ENCODE measurements at regions of chr6 and their contacts with region 1.

Region 1: GRCh38 chr6:30672445-30673253 is at the start of gene DHX16:
- DNase-seq: peak; percentile 96 to 97 (median 97)
- H3K4me3 ChIP-seq: peak within 1 kb of the TSS; percentile 76 to 99 (median 94)
- H3K27ac ChIP-seq: peak within 1 kb of the TSS; percentile 61 to 83
- H3K4me1 ChIP-seq: peaks cover 3 to 20% (median 17%) of the 10 kb centered on the region in 4 experiments
- H3K27me3 ChIP-seq: no peaks in the 10 kb centered on the region

Region 2: GRCh38 chr6:30411515-30412207 is 261.0 kb before region 1 on chr6:
- CTCF ChIA-PET with region 1: no interaction called
- POLR2A ChIA-PET with region 1: no interaction called
- DNase-seq: peak; percentile 39 to 67 (median 62)
- H3K4me3 ChIP-seq: no peak overlapping the region
- H3K27ac ChIP-seq: no peak overlapping the region
- H3K4me1 ChIP-seq: no peaks in the 10 kb centered on the region
- H3K27me3 ChIP-seq: peaks cover 14 to 90% (median 28%) of the 10 kb centered on the region in 5 experiments

Region 3: GRCh38 chr6:30578051-30578450 is 94.6 kb before region 1 on chr6:
- CTCF ChIA-PET with region 1: no interaction called
- POLR2A ChIA-PET with region 1: interaction called, 10 read pairs
- DNase-seq: no peak
- H3K4me3 ChIP-seq: no peak overlapping the region
- H3K27ac ChIP-seq: no peak overlapping the region
- H3K4me1 ChIP-seq: peaks cover 0 to 11% (median 2%) of the 10 kb centered on the region in 4 experiments
- H3K27me3 ChIP-seq: no peaks in the 10 kb centered on the region

Region 4: DNA sequence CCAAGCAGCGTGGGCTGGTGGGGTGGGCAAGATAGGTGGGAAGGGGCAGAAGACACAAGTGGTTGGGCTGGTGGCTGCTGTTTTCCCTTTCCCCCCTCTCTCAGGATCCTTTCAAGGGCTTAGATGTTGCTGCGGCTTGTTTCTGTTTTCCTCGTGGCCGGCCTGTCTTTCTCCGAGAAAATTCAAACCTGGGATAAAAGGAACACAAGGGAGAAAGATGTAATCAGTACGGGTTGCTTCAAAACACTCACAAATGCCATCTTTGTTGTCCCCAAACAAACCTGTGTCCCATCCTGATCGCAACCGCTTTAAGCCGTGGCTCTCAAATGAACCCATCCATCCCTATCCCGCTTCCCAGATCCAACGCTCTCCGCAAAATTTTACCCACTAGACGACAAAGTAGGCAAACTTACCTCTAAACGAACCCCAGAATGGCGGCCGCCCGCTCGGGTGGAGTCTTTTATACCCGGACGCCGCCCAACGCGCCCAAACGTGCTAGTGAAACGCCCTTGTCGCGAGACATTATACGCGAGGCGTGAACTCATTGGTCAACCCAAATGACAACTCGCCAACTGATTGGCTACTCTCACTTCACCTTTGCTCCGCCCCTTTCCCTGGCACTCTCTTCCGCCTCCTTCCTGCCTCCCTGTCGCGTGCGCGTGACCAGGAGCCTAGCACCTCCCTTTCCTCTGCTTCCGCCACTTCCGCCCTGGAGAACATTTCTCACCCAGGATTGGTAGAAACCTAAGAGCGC is 55.7 kb before region 1 on chr6 and contains the start of gene PPP1R10:
- CTCF ChIA-PET with region 1: interaction called, 11 read pairs
- POLR2A ChIA-PET with region 1: no interaction called
- DNase-seq: peak; percentile 100
- H3K4me3 ChIP-seq: peak within 1 kb of the TSS; percentile 74 to 100 (median 100)
- H3K27ac ChIP-seq: peak within 1 kb of the TSS; percentile 100
- H3K4me1 ChIP-seq: peaks cover 18 to 42% (median 29%) of the 10 kb centered on the region in 4 experiments
- H3K27me3 ChIP-seq: no peaks in the 10 kb centered on the region

Region 5: DNA sequence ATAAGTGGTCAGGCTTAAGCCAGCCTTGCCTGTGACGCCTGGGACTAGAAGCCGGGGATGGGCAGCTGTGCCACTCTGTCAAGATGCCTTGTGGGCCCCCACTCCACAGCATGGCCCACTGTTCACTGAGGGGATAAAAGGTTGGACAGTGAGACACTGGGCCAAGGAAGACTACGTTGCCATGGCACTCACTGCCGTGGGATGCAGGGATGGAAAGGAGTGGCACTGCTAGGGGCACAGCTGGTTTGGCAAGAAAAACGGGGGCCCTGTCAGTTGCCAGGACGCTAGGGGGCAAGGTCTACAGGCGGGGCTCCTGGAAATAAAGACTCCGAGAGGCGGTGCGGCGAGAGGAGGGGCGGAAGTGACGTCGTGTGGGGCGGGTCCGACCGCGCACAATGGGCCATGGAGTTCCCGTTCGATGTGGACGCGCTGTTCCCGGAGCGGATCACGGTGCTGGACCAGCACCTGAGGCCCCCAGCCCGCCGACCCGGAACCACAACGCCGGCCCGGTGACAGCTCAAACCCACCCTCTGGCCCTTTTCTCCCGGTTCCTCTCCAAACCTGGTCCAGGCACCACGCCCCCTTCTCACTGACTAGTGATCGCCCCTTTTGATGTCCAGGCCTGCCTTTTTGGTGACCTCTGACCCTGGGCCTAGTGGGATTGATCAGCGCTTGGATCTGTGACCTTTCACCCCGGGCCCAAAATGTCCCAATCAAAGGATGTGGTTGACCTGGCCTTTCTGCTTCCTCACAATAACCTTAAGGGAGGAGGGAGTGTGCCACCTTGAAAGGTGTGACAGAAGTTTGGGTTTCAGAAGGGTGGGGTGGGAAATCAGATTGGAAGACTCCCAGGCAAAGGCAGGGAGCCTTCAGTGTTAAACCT is 45.9 kb before region 1 on chr6 and contains the start of gene ATAT1:
- CTCF ChIA-PET with region 1: interaction called, 17 read pairs
- POLR2A ChIA-PET with region 1: interaction called, 4 read pairs
- DNase-seq: peak; percentile 89 to 92 (median 91)
- H3K4me3 ChIP-seq: peak within 1 kb of the TSS; percentile 62 to 95 (median 78)
- H3K27ac ChIP-seq: peak within 1 kb of the TSS; percentile 86 to 87
- H3K4me1 ChIP-seq: peaks cover 4 to 15% (median 14%) of the 10 kb centered on the region in 4 experiments
- H3K27me3 ChIP-seq: no peaks in the 10 kb centered on the region

Region 6: DNA sequence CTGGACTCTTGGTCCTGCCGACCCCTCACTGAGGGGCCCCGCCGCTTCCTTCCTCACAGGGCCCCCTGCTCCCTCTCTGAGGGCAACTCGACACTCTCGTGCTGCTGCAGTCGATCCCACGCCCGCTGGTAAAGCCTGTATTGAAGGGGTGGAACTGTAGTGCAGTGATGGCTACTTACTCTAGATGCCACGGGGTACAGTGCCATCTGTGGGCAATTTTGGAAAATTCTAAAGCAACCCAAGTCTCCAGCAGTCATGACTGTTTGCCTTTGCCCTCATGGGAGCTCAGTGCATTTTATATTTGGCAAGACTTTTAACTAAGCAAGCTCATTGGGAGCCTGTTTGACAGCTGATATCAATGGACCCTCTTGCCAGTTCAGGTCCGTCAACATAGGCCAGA is 32.2 kb before region 1 on chr6:
- CTCF ChIA-PET with region 1: interaction called, 10 read pairs
- POLR2A ChIA-PET with region 1: no interaction called
- DNase-seq: peak in 2 of 3 donors; percentile 48 to 57
- H3K4me3 ChIP-seq: no peak overlapping the region
- H3K27ac ChIP-seq: no peak overlapping the region
- H3K4me1 ChIP-seq: peaks cover 4 to 44% (median 34%) of the 10 kb centered on the region in 4 experiments
- H3K27me3 ChIP-seq: no peaks in the 10 kb centered on the region

Region 7: GRCh38 chr6:30646458-30647241 is 26.0 kb before region 1 on chr6 and contains the start of gene C6orf136:
- CTCF ChIA-PET with region 1: interaction called, 11 read pairs
- POLR2A ChIA-PET with region 1: no interaction called
- DNase-seq: peak; percentile 93 to 97 (median 95)
- H3K4me3 ChIP-seq: peak within 1 kb of the TSS; percentile 54 to 97 (median 91)
- H3K27ac ChIP-seq: peak within 1 kb of the TSS in 1 of 2 experiments; percentile 85
- H3K4me1 ChIP-seq: peaks cover 11 to 49% (median 38%) of the 10 kb centered on the region in 4 experiments
- H3K27me3 ChIP-seq: no peaks in the 10 kb centered on the region

Region 8: GRCh38 chr6:30656513-30656912 is 16.1 kb before region 1 on chr6:
- CTCF ChIA-PET with region 1: interaction called, 26 read pairs
- POLR2A ChIA-PET with region 1: no interaction called
- DNase-seq: no peak
- H3K4me3 ChIP-seq: no peak overlapping the region
- H3K27ac ChIP-seq: no peak overlapping the region
- H3K4me1 ChIP-seq: no peaks in the 10 kb centered on the region
- H3K27me3 ChIP-seq: no peaks in the 10 kb centered on the region

Region 9: DNA sequence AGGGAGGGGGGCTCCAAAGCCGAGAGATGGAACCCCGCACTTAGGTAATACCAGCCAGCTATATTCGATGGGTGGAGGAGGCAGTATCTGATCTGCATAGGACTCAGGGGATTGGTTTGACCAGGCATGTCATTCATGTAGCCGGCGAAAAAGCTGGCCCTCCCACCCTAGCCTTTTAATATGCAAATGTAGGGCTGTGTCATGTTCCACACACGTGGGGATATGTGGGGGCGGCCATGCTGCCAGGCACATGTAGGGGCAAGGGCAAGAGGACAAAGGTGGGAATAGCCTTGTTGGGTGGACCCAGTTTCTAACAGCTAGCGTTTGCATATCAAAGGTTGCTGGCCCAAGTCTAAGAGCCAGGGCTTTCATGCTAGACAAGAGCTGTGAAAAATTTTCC is 172.5 kb after region 1 on chr6:
- CTCF ChIA-PET with region 1: no interaction called
- POLR2A ChIA-PET with region 1: no interaction called
- DNase-seq: no peak
- H3K4me3 ChIP-seq: no peak overlapping the region
- H3K27ac ChIP-seq: no peak overlapping the region
- H3K4me1 ChIP-seq: peaks cover 0 to 23% (median 7%) of the 10 kb centered on the region in 4 experiments
- H3K27me3 ChIP-seq: no peaks in the 10 kb centered on the region

Measured in common myeloid progenitor, CD34-positive (primary cell).